ENCODE measurements at regions of chr7 and their contacts with region 1.

Region 1: GRCh38 chr7:113928113-113928512 is 9.3 kb upstream of the PPP1R3A start:
- DNase-seq: no peak
- ATAC-seq: no peak
- H3K4me3 ChIP-seq: no peak overlapping the region
- H3K27ac ChIP-seq: no peak overlapping the region
- H3K4me1 ChIP-seq: no peaks in the 10 kb centered on the region
- H3K27me3 ChIP-seq: no peaks in the 10 kb centered on the region
- CTCF ChIP-seq: no peak
- POLR2A ChIP-seq: no peak

Region 2: GRCh38 chr7:113768387-113768786 is 159.7 kb before region 1 on chr7:
- in situ Hi-C with region 1: loop called in 2 of 4 experiments (anchors 5 to 25 kb)
- intact Hi-C with region 1: no loop called
- DNase-seq: no peak
- ATAC-seq: no peak
- H3K4me3 ChIP-seq: no peak overlapping the region
- H3K27ac ChIP-seq: no peak overlapping the region
- H3K4me1 ChIP-seq: peaks cover 6 to 10% of the 10 kb centered on the region in 2 donors
- H3K27me3 ChIP-seq: no peaks in the 10 kb centered on the region
- CTCF ChIP-seq: no peak
- POLR2A ChIP-seq: no peak

Region 3: GRCh38 chr7:114255404-114255841 is 327.3 kb after region 1 on chr7:
- in situ Hi-C with region 1: no loop called
- intact Hi-C with region 1: no loop called
- DNase-seq: no peak
- ATAC-seq: no peak
- H3K4me3 ChIP-seq: no peak overlapping the region
- H3K27ac ChIP-seq: no peak overlapping the region
- H3K4me1 ChIP-seq: no peaks in the 10 kb centered on the region
- H3K27me3 ChIP-seq: no peaks in the 10 kb centered on the region
- CTCF ChIP-seq: no peak
- POLR2A ChIP-seq: no peak